MCF 10A (cell line): ENCODE measurements at regions of chr17 and their contacts with region 1.

Region 1: GRCh38 chr17:59837308-59838051 is 55.3 kb downstream of the TUBD1 start:
- DNase-seq: peak; percentile 99
- H3K4me3 Mint-ChIP-seq: peak overlapping the region; percentile 83
- H3K27ac Mint-ChIP-seq: peak overlapping the region; percentile 98
- H3K4me1 Mint-ChIP-seq: peaks cover 21% of the 10 kb centered on the region
- H3K27me3 Mint-ChIP-seq: no peaks in the 10 kb centered on the region
- CTCF ChIP-seq: no peak

Region 2: DNA sequence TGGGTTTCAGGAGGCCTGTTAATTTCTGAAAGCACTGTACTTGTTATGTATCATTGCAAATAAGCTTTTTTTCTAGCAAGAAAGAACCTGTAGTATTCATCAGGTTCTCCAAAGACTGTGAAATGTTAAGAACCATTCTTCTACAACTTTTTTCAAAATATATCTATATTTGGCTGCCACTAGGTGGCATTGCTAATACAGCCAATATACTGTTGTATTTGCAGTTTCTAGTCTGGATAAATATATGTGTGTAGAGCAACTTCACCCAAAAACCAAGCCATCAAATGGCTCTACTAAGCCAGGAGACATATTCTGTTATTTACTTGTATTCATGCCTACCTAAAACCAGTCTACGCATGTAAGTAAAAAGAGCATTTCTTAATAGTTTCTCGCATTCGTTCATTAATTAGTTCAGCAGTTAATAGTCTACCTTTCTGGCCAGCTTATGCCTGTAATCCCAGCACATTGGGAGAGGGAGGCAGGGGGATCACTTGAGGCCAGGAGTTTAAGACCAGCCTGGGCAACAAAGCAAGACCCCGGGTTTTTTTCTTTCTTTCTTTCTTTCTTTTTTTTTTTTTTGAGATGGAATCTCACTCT is 90.5 kb before region 1 on chr17:
- CTCF ChIA-PET with region 1: interaction called, 81 read pairs
- POLR2A ChIA-PET with region 1: no interaction called
- intact Hi-C with region 1: no loop called
- DNase-seq: peak; percentile 50
- H3K4me3 Mint-ChIP-seq: no peak overlapping the region
- H3K27ac Mint-ChIP-seq: no peak overlapping the region
- H3K4me1 Mint-ChIP-seq: no peaks in the 10 kb centered on the region
- H3K27me3 Mint-ChIP-seq: no peaks in the 10 kb centered on the region
- CTCF ChIP-seq: peak; percentile 58

Region 3: DNA sequence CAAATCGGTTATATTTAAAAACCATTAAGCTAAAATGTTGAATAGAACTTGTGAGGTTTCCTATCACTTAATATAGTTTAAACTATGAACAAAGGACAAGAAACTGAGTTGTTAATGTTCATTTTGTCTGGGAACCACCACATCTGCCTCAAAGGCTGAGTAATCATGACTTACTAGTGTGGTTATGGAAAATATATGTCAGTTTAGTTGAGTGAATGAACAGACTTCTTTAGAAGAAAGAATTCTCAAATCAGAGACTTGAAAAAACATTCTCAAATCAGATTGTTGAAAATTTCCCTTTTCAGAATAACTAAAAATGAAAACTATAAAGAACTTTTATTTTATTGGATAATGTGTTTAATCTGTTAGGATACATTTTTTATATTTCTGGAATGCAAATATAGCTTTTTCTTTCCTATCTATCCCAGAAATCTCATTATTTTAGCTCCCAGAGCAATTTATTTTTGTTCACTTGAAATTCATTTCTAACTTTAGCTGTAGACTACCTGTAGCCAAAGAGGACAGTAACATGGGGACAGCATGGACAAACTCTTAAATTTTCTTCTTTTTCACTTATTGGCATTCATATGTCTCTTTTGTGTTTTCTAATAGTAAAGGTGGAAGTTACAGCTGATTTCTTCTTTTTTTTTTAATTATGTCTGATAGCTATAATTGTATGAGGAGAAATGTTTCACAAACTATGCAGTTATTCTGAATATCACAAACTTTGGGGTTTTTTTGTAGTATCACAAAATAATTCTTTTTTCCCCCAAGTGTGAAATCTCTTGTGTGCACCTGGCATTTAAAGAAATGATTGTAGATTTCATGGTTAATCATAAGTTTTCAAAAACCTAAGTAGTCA is 74.7 kb before region 1 on chr17:
- CTCF ChIA-PET with region 1: interaction called, 3 read pairs
- POLR2A ChIA-PET with region 1: interaction called, 135 read pairs
- intact Hi-C with region 1: no loop called
- DNase-seq: peak; percentile 40
- H3K4me3 Mint-ChIP-seq: no peak overlapping the region
- H3K27ac Mint-ChIP-seq: peak overlapping the region; percentile 54
- H3K4me1 Mint-ChIP-seq: peaks cover 14% of the 10 kb centered on the region
- H3K27me3 Mint-ChIP-seq: no peaks in the 10 kb centered on the region
- CTCF ChIP-seq: no peak

Region 4: GRCh38 chr17:59804901-59805465 is 32.5 kb before region 1 on chr17:
- CTCF ChIA-PET with region 1: no interaction called
- POLR2A ChIA-PET with region 1: interaction called, 14 read pairs
- intact Hi-C with region 1: no loop called
- DNase-seq: no peak
- H3K4me3 Mint-ChIP-seq: no peak overlapping the region
- H3K27ac Mint-ChIP-seq: no peak overlapping the region
- H3K4me1 Mint-ChIP-seq: no peaks in the 10 kb centered on the region
- H3K27me3 Mint-ChIP-seq: no peaks in the 10 kb centered on the region
- CTCF ChIP-seq: no peak

Region 5: GRCh38 chr17:59853168-59853918 is 15.9 kb after region 1 on chr17:
- CTCF ChIA-PET with region 1: interaction called, 7 read pairs
- POLR2A ChIA-PET with region 1: interaction called, 79 read pairs
- intact Hi-C with region 1: no loop called
- DNase-seq: peak; percentile 90
- H3K4me3 Mint-ChIP-seq: peak overlapping the region; percentile 47
- H3K27ac Mint-ChIP-seq: peak overlapping the region; percentile 96
- H3K4me1 Mint-ChIP-seq: peaks cover 23% of the 10 kb centered on the region
- H3K27me3 Mint-ChIP-seq: no peaks in the 10 kb centered on the region
- CTCF ChIP-seq: peak; percentile 24

Region 6: DNA sequence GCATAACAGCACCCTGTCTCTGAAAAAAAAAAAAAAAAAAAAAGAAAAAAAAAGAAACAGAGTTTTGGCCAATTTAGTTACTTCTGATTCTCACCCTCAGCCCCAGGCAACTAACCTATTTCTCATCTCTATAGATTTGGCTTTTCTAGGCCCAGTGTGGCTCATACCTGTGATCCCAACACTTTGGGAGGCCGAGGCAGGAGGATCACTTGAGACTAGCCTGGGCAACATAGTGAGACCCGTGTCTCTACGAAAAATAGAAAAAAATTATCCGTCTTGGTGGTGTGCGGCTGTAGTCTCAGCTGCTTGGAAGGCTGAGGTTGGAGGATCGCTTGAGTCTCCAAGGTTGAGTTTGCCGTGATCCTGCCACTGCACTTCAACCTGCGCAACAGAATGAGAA is 64.1 kb after region 1 on chr17:
- CTCF ChIA-PET with region 1: no interaction called
- POLR2A ChIA-PET with region 1: no interaction called
- intact Hi-C with region 1: no loop called
- DNase-seq: no peak
- H3K4me3 Mint-ChIP-seq: no peak overlapping the region
- H3K27ac Mint-ChIP-seq: no peak overlapping the region
- H3K4me1 Mint-ChIP-seq: peaks cover 5% of the 10 kb centered on the region
- H3K27me3 Mint-ChIP-seq: no peaks in the 10 kb centered on the region
- CTCF ChIP-seq: no peak